A549 (cell line): ENCODE measurements at regions of chr7 and their contacts with region 1.

Region 1: GRCh38 chr7:143240291-143241168 is 18.7 kb downstream of the TAS2R40 start:
- DNase-seq: peak; percentile 47 to 76
- ATAC-seq: peak; percentile 84 to 96
- H3K4me3 ChIP-seq: no peak overlapping the region
- H3K27ac ChIP-seq: no peak overlapping the region
- H3K4me1 ChIP-seq: peaks cover 9% of the 10 kb centered on the region
- CTCF ChIP-seq: peak; percentile 95
- EP300 ChIP-seq: no peak
- POLR2A ChIP-seq: no peak
- RAD21 ChIP-seq: peak; percentile 89 to 92

Region 2: DNA sequence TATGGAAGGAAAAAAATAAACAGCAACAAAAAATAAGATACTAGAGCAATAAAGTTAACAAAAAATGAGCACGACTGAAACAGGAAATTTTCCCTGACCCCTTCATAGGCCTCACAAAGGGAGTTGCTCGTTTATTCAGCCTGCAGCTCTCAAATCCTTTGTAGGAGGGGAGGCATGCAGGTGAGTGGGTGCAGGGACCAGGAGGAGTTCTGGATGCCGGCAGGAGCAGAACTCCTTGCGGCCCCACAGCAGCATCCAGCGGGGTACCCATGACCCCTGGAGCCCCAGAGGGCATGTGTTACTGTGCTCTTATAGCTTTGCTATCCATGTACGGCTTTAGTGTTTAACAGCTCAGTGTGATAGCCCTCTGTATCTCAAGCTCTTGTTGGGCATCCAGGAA is 51.5 kb before region 1 on chr7:
- CTCF ChIA-PET with region 1: no interaction called
- POLR2A ChIA-PET with region 1: no interaction called
- DNase-seq: no peak
- ATAC-seq: no peak
- H3K4me3 ChIP-seq: no peak overlapping the region
- H3K27ac ChIP-seq: no peak overlapping the region
- H3K4me1 ChIP-seq: no peaks in the 10 kb centered on the region
- CTCF ChIP-seq: no peak
- EP300 ChIP-seq: no peak
- POLR2A ChIP-seq: no peak
- RAD21 ChIP-seq: no peak

Region 3: GRCh38 chr7:143199040-143199439 is 41.5 kb before region 1 on chr7:
- CTCF ChIA-PET with region 1: no interaction called
- POLR2A ChIA-PET with region 1: no interaction called
- DNase-seq: no peak
- ATAC-seq: no peak
- H3K4me3 ChIP-seq: no peak overlapping the region
- H3K27ac ChIP-seq: no peak overlapping the region
- H3K4me1 ChIP-seq: no peaks in the 10 kb centered on the region
- CTCF ChIP-seq: no peak
- EP300 ChIP-seq: no peak
- POLR2A ChIP-seq: no peak
- RAD21 ChIP-seq: no peak

Region 4: GRCh38 chr7:143223784-143224183 is 16.7 kb before region 1 on chr7:
- CTCF ChIA-PET with region 1: interaction called, 22 read pairs
- POLR2A ChIA-PET with region 1: no interaction called
- DNase-seq: no peak
- ATAC-seq: no peak
- H3K4me3 ChIP-seq: no peak overlapping the region
- H3K27ac ChIP-seq: no peak overlapping the region
- H3K4me1 ChIP-seq: no peaks in the 10 kb centered on the region
- CTCF ChIP-seq: no peak
- EP300 ChIP-seq: no peak
- POLR2A ChIP-seq: no peak
- RAD21 ChIP-seq: no peak

Region 5: GRCh38 chr7:143299840-143300239 is 59.3 kb after region 1 on chr7:
- CTCF ChIA-PET with region 1: interaction called, 37 read pairs
- POLR2A ChIA-PET with region 1: no interaction called
- DNase-seq: peak; percentile 47 to 58
- ATAC-seq: peak; percentile 88 to 92; a peak in 5 of 6 replicates
- H3K4me3 ChIP-seq: no peak overlapping the region
- H3K27ac ChIP-seq: no peak overlapping the region
- H3K4me1 ChIP-seq: peaks cover 14% of the 10 kb centered on the region
- CTCF ChIP-seq: peak; percentile 51
- EP300 ChIP-seq: no peak
- POLR2A ChIP-seq: no peak
- RAD21 ChIP-seq: peak in 1 of 2 experiments; percentile 25; a peak in 1 of 5 replicates

Region 6: DNA sequence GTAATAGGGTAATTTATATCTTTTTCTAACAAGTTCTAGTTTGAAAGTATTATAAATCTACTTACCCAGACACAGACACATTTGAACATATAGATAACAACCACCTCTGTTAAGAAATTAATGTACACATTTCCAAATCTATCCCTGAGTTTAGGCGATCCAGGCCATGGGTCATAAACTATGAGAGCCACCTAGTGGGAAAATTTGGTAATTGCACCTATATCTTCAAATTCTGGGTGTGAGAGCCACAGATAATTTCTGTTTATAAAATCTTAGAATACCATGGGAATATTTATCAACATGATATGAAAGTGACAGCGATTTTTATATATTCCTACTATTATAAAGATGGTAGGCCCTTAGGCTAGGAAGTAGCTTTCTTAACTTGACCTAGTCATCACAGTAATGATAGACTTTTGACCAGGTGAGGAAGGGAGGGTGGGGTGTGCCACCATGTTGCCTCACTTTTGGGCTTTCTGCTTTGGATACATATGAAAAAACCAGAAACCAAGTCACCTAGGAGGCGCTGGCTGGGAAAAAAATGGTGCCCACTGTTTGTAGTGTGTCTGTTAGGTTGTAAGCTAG is 176.1 kb after region 1 on chr7:
- CTCF ChIA-PET with region 1: interaction called, 42 read pairs
- POLR2A ChIA-PET with region 1: no interaction called
- DNase-seq: peak; percentile 44 to 78
- ATAC-seq: peak in 1 of 2 experiments; percentile 79; a peak in 3 of 6 replicates
- H3K4me3 ChIP-seq: no peak overlapping the region
- H3K27ac ChIP-seq: no peak overlapping the region
- H3K4me1 ChIP-seq: peaks cover 5% of the 10 kb centered on the region; the same call in 1 of the 3 replicates
- CTCF ChIP-seq: peak; percentile 81
- EP300 ChIP-seq: no peak
- POLR2A ChIP-seq: no peak
- RAD21 ChIP-seq: peak; percentile 79 to 80